ENCODE measurements at regions of chr2 and their contacts with region 1.

Region 1: DNA sequence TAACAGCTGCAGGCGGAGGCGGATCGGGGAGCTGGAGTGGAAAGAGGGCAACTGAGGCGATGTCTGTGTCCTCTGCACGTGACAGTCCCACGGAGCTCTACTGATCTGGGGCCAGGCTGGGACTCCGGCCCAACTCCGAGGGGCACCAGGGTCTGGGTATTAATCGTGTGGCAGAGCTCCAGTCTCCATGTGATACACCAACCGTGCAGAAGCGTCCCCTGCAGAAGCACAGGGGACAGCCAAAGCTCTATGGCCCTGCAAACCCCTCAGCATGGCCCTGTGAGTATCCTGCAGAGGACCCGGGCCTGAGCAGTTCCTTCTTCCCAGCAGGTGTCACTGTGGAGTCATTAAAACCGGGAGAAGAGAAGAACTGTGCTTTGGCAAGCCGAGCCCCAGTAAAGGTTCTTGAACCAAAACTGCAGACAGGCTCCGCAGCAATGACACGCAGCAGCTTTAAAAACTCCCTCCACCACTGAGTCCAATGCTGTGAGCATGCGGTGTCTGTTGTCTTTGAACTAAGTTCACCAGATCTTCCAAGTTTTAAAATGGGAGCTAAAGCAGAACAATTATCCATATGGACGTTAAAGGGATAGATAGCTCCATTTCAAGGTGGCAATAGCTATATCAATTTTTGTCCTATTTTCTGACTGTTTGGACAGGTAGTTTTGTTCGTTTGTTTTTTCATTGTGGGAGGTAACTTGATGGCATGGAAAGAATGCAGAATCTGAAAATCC is 79.4 kb downstream of the TMEM182 start:
- DNase-seq: peak; percentile 48 to 73 (median 69)
- H3K4me3 ChIP-seq: peak overlapping the region in 1 of 7 experiments; percentile 43
- H3K27ac ChIP-seq: no peak overlapping the region
- H3K4me1 ChIP-seq: peaks cover 0 to 2% (median 0%) of the 10 kb centered on the region in 4 experiments
- H3K27me3 ChIP-seq: no peaks in the 10 kb centered on the region

Region 2: DNA sequence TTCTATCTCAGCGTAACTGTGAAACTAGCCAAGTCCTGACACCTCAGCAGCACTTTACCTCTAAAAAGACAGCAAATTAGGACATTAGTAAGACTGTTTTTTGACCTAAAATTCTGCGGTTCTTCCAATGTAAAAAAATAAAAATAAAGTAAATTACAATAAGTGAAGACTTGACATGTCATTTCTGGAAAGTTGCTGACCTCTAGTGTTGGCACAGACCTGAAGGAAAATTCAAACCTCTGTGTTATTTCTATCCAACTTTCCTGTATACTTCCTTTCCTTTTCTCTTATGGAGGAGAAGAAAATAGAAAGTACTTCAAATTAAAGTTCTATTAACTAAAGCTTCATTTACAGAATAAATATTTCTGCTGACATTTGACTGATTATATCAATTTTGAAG is 31.1 kb after region 1 on chr2:
- CTCF ChIA-PET with region 1: interaction called, 46 read pairs
- POLR2A ChIA-PET with region 1: no interaction called
- DNase-seq: peak in 2 of 3 donors; percentile 15 to 28
- H3K4me3 ChIP-seq: no peak overlapping the region
- H3K27ac ChIP-seq: no peak overlapping the region
- H3K4me1 ChIP-seq: peaks cover 0 to 6% (median 2%) of the 10 kb centered on the region in 4 experiments
- H3K27me3 ChIP-seq: no peaks in the 10 kb centered on the region

Region 3: DNA sequence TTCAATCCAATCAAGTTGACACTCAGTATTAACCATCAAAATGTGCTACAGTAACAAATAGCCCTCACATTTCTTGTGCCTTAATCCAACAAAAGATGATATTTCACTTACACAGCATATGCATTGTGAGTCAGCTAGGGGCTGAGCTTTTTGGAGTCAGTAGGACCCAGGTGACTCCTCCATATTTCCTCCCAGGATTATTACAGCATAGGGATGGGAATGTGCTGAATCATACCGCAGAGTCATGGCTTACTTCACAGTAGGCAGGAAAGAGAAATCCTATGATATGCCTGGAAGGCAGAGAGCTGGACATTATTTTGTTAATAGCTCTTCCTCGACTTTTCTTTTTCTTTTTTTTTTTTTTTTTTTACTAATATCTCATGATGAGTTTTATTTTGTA is 73.9 kb after region 1 on chr2:
- CTCF ChIA-PET with region 1: no interaction called
- POLR2A ChIA-PET with region 1: no interaction called
- DNase-seq: no peak
- H3K4me3 ChIP-seq: no peak overlapping the region
- H3K27ac ChIP-seq: no peak overlapping the region
- H3K4me1 ChIP-seq: no peaks in the 10 kb centered on the region
- H3K27me3 ChIP-seq: no peaks in the 10 kb centered on the region

Region 4: GRCh38 chr2:103161456-103162289 is 320.4 kb after region 1 on chr2:
- CTCF ChIA-PET with region 1: interaction called, 23 read pairs
- POLR2A ChIA-PET with region 1: no interaction called
- DNase-seq: peak; percentile 12 to 35 (median 31)
- H3K4me3 ChIP-seq: no peak overlapping the region
- H3K27ac ChIP-seq: no peak overlapping the region
- H3K4me1 ChIP-seq: no peaks in the 10 kb centered on the region
- H3K27me3 ChIP-seq: peaks cover 0 to 4% (median 0%) of the 10 kb centered on the region in 5 experiments

Measured in common myeloid progenitor, CD34-positive (primary cell).